MCF 10A (cell line): ENCODE measurements at regions of chr17 and their contacts with region 1.

Region 1: GRCh38 chr17:74379495-74380085 is 12.3 kb downstream of the GPR142 start:
- DNase-seq: peak; percentile 87
- H3K4me3 Mint-ChIP-seq: peak overlapping the region; percentile 37
- H3K27ac Mint-ChIP-seq: no peak overlapping the region
- H3K4me1 Mint-ChIP-seq: peaks cover 16% of the 10 kb centered on the region
- H3K27me3 Mint-ChIP-seq: peaks cover 39% of the 10 kb centered on the region
- CTCF ChIP-seq: peak; percentile 95

Region 2: GRCh38 chr17:72822358-72823023 is 1557.1 kb before region 1 on chr17:
- CTCF ChIA-PET with region 1: no interaction called
- POLR2A ChIA-PET with region 1: no interaction called
- intact Hi-C with region 1: no loop called
- DNase-seq: no peak
- H3K4me3 Mint-ChIP-seq: no peak overlapping the region
- H3K27ac Mint-ChIP-seq: no peak overlapping the region
- H3K4me1 Mint-ChIP-seq: no peaks in the 10 kb centered on the region
- H3K27me3 Mint-ChIP-seq: no peaks in the 10 kb centered on the region
- CTCF ChIP-seq: no peak

Region 3: GRCh38 chr17:74394977-74395376 is 15.4 kb after region 1 on chr17:
- CTCF ChIA-PET with region 1: interaction called, 21 read pairs
- POLR2A ChIA-PET with region 1: no interaction called
- intact Hi-C with region 1: no loop called
- DNase-seq: no peak
- H3K4me3 Mint-ChIP-seq: no peak overlapping the region
- H3K27ac Mint-ChIP-seq: no peak overlapping the region
- H3K4me1 Mint-ChIP-seq: peaks cover 6% of the 10 kb centered on the region
- H3K27me3 Mint-ChIP-seq: peaks cover 8% of the 10 kb centered on the region
- CTCF ChIP-seq: no peak

Region 4: GRCh38 chr17:74430706-74431567 is 51.3 kb after region 1 on chr17:
- CTCF ChIA-PET with region 1: interaction called, 5 read pairs
- POLR2A ChIA-PET with region 1: interaction called, 23 read pairs
- intact Hi-C with region 1: no loop called
- DNase-seq: peak; percentile 93
- H3K4me3 Mint-ChIP-seq: peak overlapping the region; percentile 88
- H3K27ac Mint-ChIP-seq: peak overlapping the region; percentile 98
- H3K4me1 Mint-ChIP-seq: peaks cover 34% of the 10 kb centered on the region
- H3K27me3 Mint-ChIP-seq: no peaks in the 10 kb centered on the region
- CTCF ChIP-seq: no peak

Region 5: GRCh38 chr17:74452033-74452840 is 72.6 kb after region 1 on chr17:
- CTCF ChIA-PET with region 1: interaction called, 283 read pairs
- POLR2A ChIA-PET with region 1: interaction called, 46 read pairs
- intact Hi-C with region 1: loop called (anchors 1 kb)
- DNase-seq: no peak
- H3K4me3 Mint-ChIP-seq: no peak overlapping the region
- H3K27ac Mint-ChIP-seq: no peak overlapping the region
- H3K4me1 Mint-ChIP-seq: peaks cover 13% of the 10 kb centered on the region
- H3K27me3 Mint-ChIP-seq: no peaks in the 10 kb centered on the region
- CTCF ChIP-seq: no peak

Region 6: DNA sequence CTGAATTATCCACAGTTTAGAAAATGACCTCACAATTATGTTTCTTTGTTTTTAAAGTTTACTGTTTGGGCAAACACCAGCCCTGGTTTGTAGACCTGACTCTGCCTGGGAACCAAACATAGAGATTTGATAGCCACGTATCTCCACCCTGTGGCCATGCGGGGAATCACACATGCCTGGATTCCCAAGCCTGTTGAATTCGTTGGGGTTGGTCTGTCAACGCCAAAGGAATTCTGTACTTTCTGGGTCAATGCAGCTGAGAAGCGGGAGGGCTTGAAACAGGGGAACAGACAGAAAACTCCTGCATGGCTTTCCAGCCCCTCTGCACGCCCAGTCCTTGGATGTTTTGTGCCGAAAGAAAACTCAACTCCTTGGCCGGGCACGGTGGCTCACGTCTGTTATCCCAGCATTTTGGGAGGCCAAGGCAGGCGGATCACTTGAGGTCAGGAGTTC is 113.8 kb after region 1 on chr17:
- CTCF ChIA-PET with region 1: interaction called, 32 read pairs
- POLR2A ChIA-PET with region 1: interaction called, 3 read pairs
- intact Hi-C with region 1: loop called (anchors 1 kb)
- DNase-seq: peak; percentile 70
- H3K4me3 Mint-ChIP-seq: no peak overlapping the region
- H3K27ac Mint-ChIP-seq: no peak overlapping the region
- H3K4me1 Mint-ChIP-seq: no peaks in the 10 kb centered on the region
- H3K27me3 Mint-ChIP-seq: peaks cover 28% of the 10 kb centered on the region
- CTCF ChIP-seq: peak; percentile 82

Region 7: GRCh38 chr17:74601944-74602572 is 222.5 kb after region 1 on chr17:
- CTCF ChIA-PET with region 1: interaction called, 24 read pairs
- POLR2A ChIA-PET with region 1: no interaction called
- intact Hi-C with region 1: loop called (anchors 1 kb)
- DNase-seq: peak; percentile 80
- H3K4me3 Mint-ChIP-seq: no peak overlapping the region
- H3K27ac Mint-ChIP-seq: no peak overlapping the region
- H3K4me1 Mint-ChIP-seq: peaks cover 45% of the 10 kb centered on the region
- H3K27me3 Mint-ChIP-seq: no peaks in the 10 kb centered on the region
- CTCF ChIP-seq: peak; percentile 88